Activated T-helper 2 cell treated with anti-CD3 and anti-CD28 coated beads, Interferon-gamma antibody, Interleukin-2, Interleukin-4, amounts not matched to agents 10 μg/mL and 5 μg/mL and 100 μg/mL, durations not matched to agents 14 hours and 24 hours and 36 hours (primary cell): ENCODE measurements at regions of chr18 and their contacts with region 1.

Region 1: GRCh38 chr18:59927246-59927825 is 27.5 kb downstream of the PMAIP1 start:
- DNase-seq: no peak
- H3K4me3 Mint-ChIP-seq: peak overlapping the region; percentile 34
- H3K27ac Mint-ChIP-seq: peak overlapping the region; percentile 87
- H3K4me1 Mint-ChIP-seq: peaks cover 52% of the 10 kb centered on the region
- H3K27me3 Mint-ChIP-seq: no peaks in the 10 kb centered on the region

Region 2: DNA sequence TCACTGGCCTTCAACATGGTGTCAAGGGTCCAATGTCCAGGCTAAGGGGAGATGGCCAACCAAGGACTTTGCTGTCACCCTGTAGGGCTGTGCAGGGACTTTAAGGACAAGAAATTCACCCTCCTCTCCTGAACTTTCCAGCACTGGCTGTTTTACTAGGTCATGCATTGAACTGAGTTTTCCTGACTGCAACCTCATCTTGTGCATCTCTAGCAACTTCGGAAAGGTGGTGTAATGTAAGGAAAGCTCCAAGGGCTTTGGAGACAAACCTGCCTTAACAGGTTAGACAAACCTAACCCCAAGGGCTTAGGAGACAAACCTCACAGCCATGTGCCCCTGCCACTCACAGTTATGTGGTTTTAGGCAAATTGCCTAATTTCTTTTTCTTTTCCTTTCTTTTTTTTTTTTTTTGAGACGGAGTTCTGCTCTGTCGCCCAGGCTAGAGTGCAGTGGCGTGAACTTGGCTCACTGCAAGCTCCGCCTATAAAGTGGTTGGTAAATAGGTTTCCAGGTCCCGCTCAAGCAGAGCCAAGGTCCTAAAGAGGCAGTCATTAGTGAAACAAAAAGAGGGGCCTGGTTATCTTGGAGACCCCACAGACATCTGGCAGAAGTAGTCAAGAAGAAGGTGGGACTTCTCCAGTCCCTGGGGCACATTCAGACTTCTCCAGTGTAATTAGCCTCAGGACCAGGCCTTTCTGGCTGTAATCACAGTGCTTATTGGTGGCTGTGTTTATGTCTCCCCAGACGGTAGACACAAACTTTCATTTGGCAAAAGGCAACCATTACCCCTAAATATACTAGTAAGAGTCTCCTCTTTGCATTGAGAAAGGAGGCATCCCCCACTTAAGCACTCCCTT is 65.1 kb before region 1 on chr18:
- intact Hi-C with region 1: no loop called
- DNase-seq: no peak
- H3K4me3 Mint-ChIP-seq: no peak overlapping the region
- H3K27ac Mint-ChIP-seq: no peak overlapping the region
- H3K4me1 Mint-ChIP-seq: no peaks in the 10 kb centered on the region
- H3K27me3 Mint-ChIP-seq: no peaks in the 10 kb centered on the region

Region 3: GRCh38 chr18:59950215-59950944 is 23.0 kb after region 1 on chr18:
- intact Hi-C with region 1: loop called (anchors 1 kb)
- DNase-seq: no peak
- H3K4me3 Mint-ChIP-seq: no peak overlapping the region
- H3K27ac Mint-ChIP-seq: peak overlapping the region; percentile 47
- H3K4me1 Mint-ChIP-seq: peaks cover 37% of the 10 kb centered on the region
- H3K27me3 Mint-ChIP-seq: peaks cover 5% of the 10 kb centered on the region